ENCODE measurements at regions of chr2 and their contacts with region 1.

Region 1: DNA sequence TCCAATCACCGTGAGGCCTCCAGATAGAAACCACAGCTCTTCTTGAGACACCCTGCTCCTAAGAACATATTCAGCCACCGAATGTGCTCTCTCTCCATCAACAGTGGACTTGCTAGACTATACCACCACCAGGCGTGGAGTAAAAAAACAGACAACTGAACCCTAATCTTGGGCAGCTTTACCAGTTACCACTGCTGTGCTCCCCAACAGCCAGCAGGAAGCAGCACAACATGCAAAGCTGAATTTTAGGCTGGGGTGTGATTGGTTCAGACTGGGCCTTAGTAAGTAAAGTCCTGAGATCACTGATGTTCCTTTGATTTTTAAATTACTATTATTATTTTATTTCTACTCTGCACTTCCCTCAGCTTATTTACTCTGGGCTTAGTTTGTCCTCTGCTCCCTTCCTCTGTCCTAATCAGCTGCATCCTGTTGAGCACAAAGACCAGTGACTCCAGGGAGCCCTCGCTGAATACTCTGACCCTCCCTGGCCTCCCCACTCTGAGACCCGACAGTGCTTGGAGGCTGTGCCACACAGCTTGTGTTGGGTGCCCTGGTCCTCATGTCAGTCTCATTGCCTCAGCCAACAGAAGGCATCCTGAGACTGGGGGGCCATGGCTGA is 21.9 kb downstream of the MRPL35 start:
- DNase-seq: peak; percentile 45
- ATAC-seq: peak; percentile 71
- H3K4me3 ChIP-seq: no peak overlapping the region
- H3K27ac ChIP-seq: no peak overlapping the region
- H3K4me1 ChIP-seq: peaks cover 7% of the 10 kb centered on the region
- H3K27me3 ChIP-seq: peaks cover 2% of the 10 kb centered on the region; the same call in 1 of the 2 replicates
- CTCF ChIP-seq: peak; percentile 59
- POLR2A ChIP-seq: no peak
- RAD21 ChIP-seq: peak; percentile 60

Region 2: DNA sequence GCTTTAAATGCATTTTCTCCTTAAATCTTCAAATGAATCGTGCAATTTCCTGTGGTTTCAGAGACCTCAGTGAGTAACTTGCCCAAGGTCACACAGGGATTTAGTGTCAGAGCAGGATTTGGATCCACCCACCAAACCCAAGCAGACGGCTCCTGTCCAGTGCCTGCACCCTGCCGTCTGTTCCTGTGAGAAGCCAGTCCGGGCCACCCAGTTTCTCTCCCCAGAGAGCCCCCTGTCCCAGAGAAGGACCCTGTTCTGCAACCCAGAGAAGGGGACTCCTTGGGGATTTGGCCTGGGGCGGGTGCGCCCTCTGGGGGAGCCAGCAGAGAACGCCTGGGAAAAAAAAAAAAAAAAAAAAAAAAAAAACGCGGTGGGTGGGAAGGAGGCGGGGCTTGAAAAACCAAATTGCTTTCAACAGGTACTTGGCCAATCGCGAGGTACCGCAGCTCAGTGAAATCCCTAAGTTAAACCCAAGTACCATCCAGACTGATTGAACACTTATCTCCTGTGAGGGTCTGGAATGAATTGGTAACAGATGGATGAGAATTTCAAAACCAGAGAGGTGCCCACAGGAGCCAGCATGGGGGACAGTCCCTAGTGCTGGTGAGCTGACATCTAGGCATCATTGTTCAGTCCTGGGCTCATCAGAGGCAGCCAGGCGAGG is 147.1 kb after region 1 on chr2:
- CTCF ChIA-PET with region 1: interaction called, 4 read pairs
- POLR2A ChIA-PET with region 1: no interaction called
- dilution Hi-C with region 1: no loop called
- in situ Hi-C with region 1: no loop called
- intact Hi-C with region 1: loop called (anchors 2 kb)
- DNase-seq: peak; percentile 39
- ATAC-seq: peak; percentile 29; the same call in 1 of the 2 replicates
- H3K4me3 ChIP-seq: no peak overlapping the region
- H3K27ac ChIP-seq: no peak overlapping the region
- H3K4me1 ChIP-seq: 0 out of 2 replicates have a peak, but pooled peaks cover 3% of the 10 kb centered on the region
- H3K27me3 ChIP-seq: peaks cover 4% of the 10 kb centered on the region
- CTCF ChIP-seq: peak; percentile 57
- POLR2A ChIP-seq: no peak
- RAD21 ChIP-seq: peak; percentile 51

Region 3: DNA sequence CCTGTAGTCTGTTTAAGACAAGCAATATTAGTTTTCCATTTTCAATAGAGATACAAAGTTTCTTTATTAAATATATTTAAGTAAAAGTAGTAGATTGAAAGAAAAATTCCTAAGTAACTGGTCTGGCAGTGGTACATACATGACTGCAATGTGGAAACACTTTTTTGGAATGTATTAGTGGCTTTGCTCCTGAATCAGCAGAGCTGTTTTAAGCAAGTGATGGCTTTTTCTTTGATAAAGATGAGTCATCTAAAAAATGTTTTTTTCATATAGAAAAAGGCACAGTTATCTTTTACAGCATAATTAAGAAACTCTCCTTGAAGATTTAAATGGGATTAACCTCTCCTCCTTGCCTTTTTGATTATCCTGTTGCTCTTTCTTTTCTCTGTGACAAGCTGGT is 254.9 kb after region 1 on chr2:
- CTCF ChIA-PET with region 1: no interaction called
- POLR2A ChIA-PET with region 1: no interaction called
- dilution Hi-C with region 1: no loop called
- in situ Hi-C with region 1: no loop called
- intact Hi-C with region 1: loop called (anchors 5 kb)
- DNase-seq: peak; percentile 83
- ATAC-seq: peak; percentile 67
- H3K4me3 ChIP-seq: no peak overlapping the region
- H3K27ac ChIP-seq: no peak overlapping the region
- H3K4me1 ChIP-seq: peaks cover 6% of the 10 kb centered on the region; the same call in 1 of the 2 replicates
- H3K27me3 ChIP-seq: no peaks in the 10 kb centered on the region
- CTCF ChIP-seq: no peak
- POLR2A ChIP-seq: no peak
- RAD21 ChIP-seq: no peak

Measured in IMR-90 (cell line).